ENCODE measurements at regions of chr6 and their contacts with region 1.

Region 1: DNA sequence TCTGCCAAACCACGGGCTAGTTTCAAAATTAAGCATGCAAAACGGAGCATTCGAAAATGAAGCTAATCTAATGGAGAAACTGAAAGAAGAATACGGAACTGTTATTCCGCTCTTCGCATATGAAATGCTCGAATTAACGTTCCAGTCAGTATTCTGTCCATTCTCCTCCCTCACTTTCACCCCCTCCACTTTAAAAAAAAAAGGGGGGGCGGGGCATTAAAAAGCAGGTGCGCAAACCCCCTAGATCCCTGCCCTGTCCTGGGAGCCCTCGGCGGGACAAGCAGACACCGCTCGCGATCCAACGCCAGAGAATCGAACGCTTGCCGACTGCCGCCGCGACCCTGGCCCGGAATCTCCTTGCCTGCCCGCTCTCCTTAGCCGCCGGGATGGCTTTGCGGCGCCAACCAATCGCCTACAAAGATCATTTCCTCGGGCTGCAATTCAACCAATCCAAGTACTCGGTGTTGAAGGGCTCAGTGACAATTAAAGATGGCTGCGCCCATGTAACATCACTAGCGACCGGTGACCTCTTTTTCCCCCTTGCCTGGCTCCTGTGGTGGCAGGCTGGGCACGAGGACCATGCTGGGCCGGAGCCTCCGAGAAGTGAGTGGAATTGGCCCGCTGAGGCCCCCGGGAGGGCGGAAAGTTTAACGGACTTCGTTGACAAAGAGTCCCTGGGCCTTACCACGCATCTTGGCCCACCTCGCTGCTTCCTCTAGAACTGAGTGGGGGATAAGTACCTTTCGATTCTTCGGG is at the starts of genes QRSL1 and RTN4IP1:
- DNase-seq: peak; percentile 85
- H3K4me3 Mint-ChIP-seq: peak within 1 kb of the TSS; percentile 91
- H3K27ac Mint-ChIP-seq: peak within 1 kb of the TSS; percentile 97
- H3K4me1 Mint-ChIP-seq: peaks cover 41% of the 10 kb centered on the region
- H3K27me3 Mint-ChIP-seq: no peaks in the 10 kb centered on the region
- total RNA-seq, gene QRSL1: 18.9 and 21.8 TPM in 2 replicates
- total RNA-seq, gene RTN4IP1: 6.4 and 7.9 TPM in 2 replicates

Region 2: GRCh38 chr6:106608062-106608668 is 21.1 kb before region 1 on chr6:
- intact Hi-C with region 1: loop called (anchors 1 kb)
- DNase-seq: peak; percentile 18
- H3K4me3 Mint-ChIP-seq: no peak overlapping the region
- H3K27ac Mint-ChIP-seq: no peak overlapping the region
- H3K4me1 Mint-ChIP-seq: peaks cover 29% of the 10 kb centered on the region
- H3K27me3 Mint-ChIP-seq: no peaks in the 10 kb centered on the region

Region 3: GRCh38 chr6:107459283-107460082 is 830.2 kb after region 1 on chr6 and contains the start of gene PDSS2:
- intact Hi-C with region 1: loop called (anchors 2 kb)
- DNase-seq: peak; percentile 96
- H3K4me3 Mint-ChIP-seq: peak within 1 kb of the TSS; percentile 95
- H3K27ac Mint-ChIP-seq: peak within 1 kb of the TSS; percentile 88
- H3K4me1 Mint-ChIP-seq: peaks cover 13% of the 10 kb centered on the region
- H3K27me3 Mint-ChIP-seq: peaks cover 2% of the 10 kb centered on the region
- total RNA-seq, gene PDSS2: 13.0 and 14.4 TPM in 2 replicates